Calu3 (cell line): ENCODE measurements at regions of chr14 and their contacts with region 1.

Region 1: GRCh38 chr14:60064491-60065072 is 27.1 kb upstream of the PCNX4 start:
- DNase-seq: no peak
- H3K4me3 Mint-ChIP-seq: no peak overlapping the region
- H3K27ac Mint-ChIP-seq: no peak overlapping the region
- H3K4me1 Mint-ChIP-seq: no peaks in the 10 kb centered on the region
- H3K27me3 Mint-ChIP-seq: no peaks in the 10 kb centered on the region
- CTCF ChIP-seq: no peak

Region 2: DNA sequence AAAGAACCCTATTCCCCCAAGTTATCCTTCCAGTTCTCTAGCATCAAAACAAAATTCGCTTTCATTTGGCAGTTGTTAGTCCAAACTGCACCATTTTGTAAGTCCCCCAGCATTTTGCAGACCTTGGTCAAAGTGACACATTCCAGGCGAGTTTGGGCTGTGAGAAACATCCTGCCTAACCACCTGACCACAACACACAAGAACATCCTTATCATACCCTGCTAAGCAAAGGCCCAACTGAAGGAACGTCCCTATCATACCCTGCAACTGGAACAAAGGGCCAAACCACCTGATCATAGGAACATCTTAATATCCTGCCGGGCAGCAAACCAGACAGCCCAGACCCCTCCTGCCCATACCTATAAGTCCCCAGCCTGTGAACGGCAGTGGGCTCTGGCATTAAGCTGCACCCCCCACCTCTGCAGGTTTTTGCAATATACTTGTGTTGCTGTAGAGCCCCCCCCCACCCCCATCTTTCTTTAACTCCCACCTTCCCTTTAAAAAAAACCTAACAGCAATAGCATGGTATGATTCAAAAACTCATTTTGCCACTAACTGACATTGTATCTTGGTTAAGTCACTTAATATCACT is 29.8 kb after region 1 on chr14:
- CTCF ChIA-PET with region 1: no interaction called
- intact Hi-C with region 1: no loop called
- DNase-seq: peak; percentile 30
- H3K4me3 Mint-ChIP-seq: peak overlapping the region; percentile 79
- H3K27ac Mint-ChIP-seq: peak overlapping the region; percentile 77
- H3K4me1 Mint-ChIP-seq: peaks cover 25% of the 10 kb centered on the region
- H3K27me3 Mint-ChIP-seq: no peaks in the 10 kb centered on the region
- CTCF ChIP-seq: no peak

Region 3: DNA sequence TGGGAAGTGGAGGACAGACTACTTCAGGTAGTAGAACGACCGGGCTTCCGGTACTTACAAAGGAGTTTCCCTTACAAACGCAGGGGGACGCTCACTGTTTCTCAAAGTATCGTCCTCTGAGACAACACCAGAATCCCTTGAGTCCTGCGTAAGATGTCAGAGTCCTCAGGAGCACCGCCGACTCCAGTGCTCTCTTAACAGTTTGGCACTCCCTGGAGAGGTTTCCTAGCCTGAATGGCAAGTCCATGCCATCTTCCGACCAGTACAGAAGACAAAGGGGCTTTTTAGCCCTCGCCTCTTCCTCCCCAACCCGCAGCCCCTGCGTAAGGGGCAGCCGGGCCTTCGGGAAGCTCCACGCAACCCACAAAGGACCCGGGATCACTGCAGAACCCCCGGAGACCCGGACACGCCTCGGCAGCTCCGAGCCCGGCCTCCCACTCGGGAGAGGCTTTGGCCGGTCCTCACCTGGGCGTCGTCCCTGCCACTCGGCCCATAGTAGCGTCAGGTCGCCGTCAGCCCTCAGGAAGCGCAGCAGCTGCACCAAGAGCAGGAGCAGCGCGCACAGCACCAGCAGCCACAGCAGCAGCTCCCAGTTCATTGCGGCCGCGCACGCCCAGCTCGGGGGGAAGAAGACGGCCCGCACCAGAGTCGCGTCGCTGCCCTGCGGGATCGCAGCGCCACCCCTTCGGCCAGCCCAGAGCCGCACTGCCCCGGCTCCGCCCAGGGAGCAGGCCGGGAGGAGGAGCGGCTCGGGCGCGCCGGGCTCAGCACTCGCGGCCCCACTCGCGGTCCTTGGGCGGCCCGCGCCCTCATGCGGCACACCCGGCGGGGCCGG is 100.3 kb after region 1 on chr14 and contains the start of gene DHRS7:
- CTCF ChIA-PET with region 1: no interaction called
- intact Hi-C with region 1: loop called (anchors 5 kb)
- DNase-seq: peak; percentile 82
- H3K4me3 Mint-ChIP-seq: peak within 1 kb of the TSS; percentile 92
- H3K27ac Mint-ChIP-seq: peak within 1 kb of the TSS; percentile 75
- H3K4me1 Mint-ChIP-seq: peaks cover 9% of the 10 kb centered on the region
- H3K27me3 Mint-ChIP-seq: no peaks in the 10 kb centered on the region
- CTCF ChIP-seq: no peak
- total RNA-seq, gene DHRS7: 34.9 and 39.3 TPM in 2 replicates

Region 4: GRCh38 chr14:60184146-60184904 is 119.7 kb after region 1 on chr14:
- CTCF ChIA-PET with region 1: no interaction called
- intact Hi-C with region 1: loop called (anchors 1 kb)
- DNase-seq: peak; percentile 36
- H3K4me3 Mint-ChIP-seq: no peak overlapping the region
- H3K27ac Mint-ChIP-seq: no peak overlapping the region
- H3K4me1 Mint-ChIP-seq: no peaks in the 10 kb centered on the region
- H3K27me3 Mint-ChIP-seq: no peaks in the 10 kb centered on the region
- CTCF ChIP-seq: peak; percentile 29